CD8-positive, alpha-beta T cell (primary cell): ENCODE measurements at regions of chr14 and their contacts with region 1.

Region 1: DNA sequence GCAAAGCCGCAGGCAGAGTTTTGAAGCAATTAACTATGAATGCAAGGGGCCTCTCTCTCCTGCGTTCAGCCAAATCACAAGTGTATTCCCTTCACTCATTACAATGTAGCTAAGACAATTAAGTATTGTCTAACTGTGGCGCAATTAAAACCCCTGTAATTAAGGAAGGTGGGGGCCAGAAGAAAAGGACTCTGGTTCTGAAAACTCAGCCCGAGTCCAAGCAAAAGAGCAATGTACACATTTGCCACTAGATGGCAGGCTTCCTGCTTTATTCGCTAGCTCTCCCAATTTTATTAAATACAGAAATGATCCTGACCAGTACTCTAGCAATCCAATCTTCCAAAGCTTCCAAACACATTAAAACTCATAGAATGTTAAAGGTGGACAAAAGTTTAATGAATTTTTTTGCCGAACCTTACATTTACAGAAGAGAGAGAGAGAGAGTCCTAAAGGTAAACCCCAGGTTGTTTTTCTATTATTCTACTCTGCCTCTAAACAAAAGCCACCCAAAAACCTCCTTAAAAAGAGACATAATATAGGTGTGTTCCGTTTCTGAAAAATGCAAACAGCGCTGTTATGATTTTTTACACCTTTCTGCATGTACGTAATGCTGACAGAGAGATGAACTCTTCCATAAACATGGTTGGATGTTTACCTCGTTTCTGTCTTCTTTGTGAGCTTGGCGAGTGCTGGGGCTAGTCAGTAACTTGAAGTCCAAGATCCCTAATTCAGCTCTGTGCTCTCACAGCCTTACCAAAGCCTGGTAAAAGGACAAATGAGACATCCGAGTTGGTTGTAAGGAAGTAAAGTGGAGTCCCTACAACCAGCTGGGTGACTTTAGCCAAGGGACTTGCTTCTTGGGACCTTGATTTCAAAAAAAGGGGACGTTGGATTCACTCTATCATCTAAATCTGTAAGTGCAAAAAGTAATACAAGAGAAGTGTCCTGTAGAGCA is 50.9 kb upstream of the VASH1 start:
- DNase-seq: peak in 4 of 9 experiments; percentile 23 to 62 (median 44)
- ATAC-seq: no peak
- H3K4me3 ChIP-seq: no peak overlapping the region
- H3K4me3 Mint-ChIP-seq: no peak overlapping the region
- H3K27ac ChIP-seq: no peak overlapping the region
- H3K27ac Mint-ChIP-seq: no peak overlapping the region
- H3K4me1 ChIP-seq: no peaks in the 10 kb centered on the region
- H3K4me1 Mint-ChIP-seq: no peaks in the 10 kb centered on the region
- H3K27me3 ChIP-seq: no peaks in the 10 kb centered on the region
- H3K27me3 Mint-ChIP-seq: peaks cover 13% of the 10 kb centered on the region
- CTCF ChIP-seq: peak; percentile 63

Region 2: GRCh38 chr14:76687611-76688382 is 22.5 kb before region 1 on chr14:
- CTCF ChIA-PET with region 1: interaction called, 13 read pairs
- POLR2A ChIA-PET with region 1: no interaction called
- intact Hi-C with region 1: no loop called
- DNase-seq: no peak
- ATAC-seq: no peak
- H3K4me3 ChIP-seq: no peak overlapping the region
- H3K4me3 Mint-ChIP-seq: no peak overlapping the region
- H3K27ac ChIP-seq: no peak overlapping the region
- H3K27ac Mint-ChIP-seq: no peak overlapping the region
- H3K4me1 ChIP-seq: no peaks in the 10 kb centered on the region
- H3K4me1 Mint-ChIP-seq: no peaks in the 10 kb centered on the region
- H3K27me3 ChIP-seq: no peaks in the 10 kb centered on the region
- H3K27me3 Mint-ChIP-seq: peaks cover 12% of the 10 kb centered on the region
- CTCF ChIP-seq: no peak

Region 3: DNA sequence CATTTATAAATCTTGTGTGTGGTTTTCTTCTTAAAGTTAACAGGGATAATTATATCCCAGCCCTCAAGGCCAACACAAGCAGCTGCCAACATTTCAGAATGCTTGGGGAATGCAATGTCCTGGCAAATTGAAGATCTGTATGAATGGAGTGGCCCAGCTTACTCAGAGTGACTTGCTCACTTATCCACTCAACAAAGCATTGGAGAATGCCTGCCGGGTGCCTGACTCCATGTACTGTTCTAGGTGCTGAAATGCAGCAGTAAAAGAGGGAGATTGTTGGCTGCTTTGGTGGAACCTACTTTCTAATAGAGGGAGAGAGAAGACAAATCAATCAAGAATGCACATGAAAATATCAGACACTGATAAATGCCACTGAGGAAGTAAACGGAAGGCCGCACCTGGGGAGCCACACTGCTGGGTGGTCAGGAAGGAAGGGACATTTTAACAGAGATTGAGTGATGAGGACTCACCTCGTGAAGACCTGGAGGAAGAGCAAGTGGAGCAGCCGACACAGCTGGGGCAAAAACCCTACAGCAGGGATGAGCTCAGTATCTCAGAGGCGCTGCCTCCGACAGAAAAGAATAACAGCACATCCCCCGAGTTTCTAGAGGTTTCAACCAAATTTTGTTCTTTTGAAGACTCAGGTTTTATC is 10.3 kb before region 1 on chr14:
- CTCF ChIA-PET with region 1: interaction called, 13 read pairs
- POLR2A ChIA-PET with region 1: no interaction called
- intact Hi-C with region 1: no loop called
- DNase-seq: no peak
- ATAC-seq: no peak
- H3K4me3 ChIP-seq: no peak overlapping the region
- H3K4me3 Mint-ChIP-seq: no peak overlapping the region
- H3K27ac ChIP-seq: no peak overlapping the region
- H3K27ac Mint-ChIP-seq: no peak overlapping the region
- H3K4me1 ChIP-seq: no peaks in the 10 kb centered on the region
- H3K4me1 Mint-ChIP-seq: no peaks in the 10 kb centered on the region
- H3K27me3 ChIP-seq: no peaks in the 10 kb centered on the region
- H3K27me3 Mint-ChIP-seq: peaks cover 4% of the 10 kb centered on the region
- CTCF ChIP-seq: no peak

Region 4: DNA sequence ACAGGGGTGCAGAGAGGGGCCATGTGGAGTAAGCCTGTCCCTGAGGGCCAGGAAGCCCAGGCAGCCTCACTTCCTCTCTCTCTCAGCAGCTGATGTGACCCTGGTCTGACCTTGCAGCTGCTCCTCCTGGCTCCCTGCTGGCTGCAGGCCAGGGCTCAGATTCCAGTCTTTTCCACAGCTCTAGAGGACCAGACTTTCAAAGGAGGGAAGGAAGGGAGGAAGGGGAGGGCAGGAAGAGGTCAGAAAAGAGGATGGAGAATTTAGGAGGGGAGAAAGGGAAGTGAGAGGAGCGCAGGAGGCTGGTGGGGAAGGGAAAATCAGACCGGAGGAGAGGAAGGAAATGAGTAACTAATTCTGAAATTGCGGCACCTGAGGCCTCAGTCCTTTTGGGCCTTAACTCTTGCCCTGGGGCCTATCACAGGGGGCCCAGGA is 10.1 kb after region 1 on chr14:
- CTCF ChIA-PET with region 1: interaction called, 37 read pairs
- POLR2A ChIA-PET with region 1: interaction called, 6 read pairs
- intact Hi-C with region 1: no loop called
- DNase-seq: no peak
- ATAC-seq: no peak
- H3K4me3 ChIP-seq: no peak overlapping the region
- H3K4me3 Mint-ChIP-seq: no peak overlapping the region
- H3K27ac ChIP-seq: no peak overlapping the region
- H3K27ac Mint-ChIP-seq: no peak overlapping the region
- H3K4me1 ChIP-seq: no peaks in the 10 kb centered on the region
- H3K4me1 Mint-ChIP-seq: no peaks in the 10 kb centered on the region
- H3K27me3 ChIP-seq: no peaks in the 10 kb centered on the region
- H3K27me3 Mint-ChIP-seq: peaks cover 28% of the 10 kb centered on the region
- CTCF ChIP-seq: no peak

Region 5: DNA sequence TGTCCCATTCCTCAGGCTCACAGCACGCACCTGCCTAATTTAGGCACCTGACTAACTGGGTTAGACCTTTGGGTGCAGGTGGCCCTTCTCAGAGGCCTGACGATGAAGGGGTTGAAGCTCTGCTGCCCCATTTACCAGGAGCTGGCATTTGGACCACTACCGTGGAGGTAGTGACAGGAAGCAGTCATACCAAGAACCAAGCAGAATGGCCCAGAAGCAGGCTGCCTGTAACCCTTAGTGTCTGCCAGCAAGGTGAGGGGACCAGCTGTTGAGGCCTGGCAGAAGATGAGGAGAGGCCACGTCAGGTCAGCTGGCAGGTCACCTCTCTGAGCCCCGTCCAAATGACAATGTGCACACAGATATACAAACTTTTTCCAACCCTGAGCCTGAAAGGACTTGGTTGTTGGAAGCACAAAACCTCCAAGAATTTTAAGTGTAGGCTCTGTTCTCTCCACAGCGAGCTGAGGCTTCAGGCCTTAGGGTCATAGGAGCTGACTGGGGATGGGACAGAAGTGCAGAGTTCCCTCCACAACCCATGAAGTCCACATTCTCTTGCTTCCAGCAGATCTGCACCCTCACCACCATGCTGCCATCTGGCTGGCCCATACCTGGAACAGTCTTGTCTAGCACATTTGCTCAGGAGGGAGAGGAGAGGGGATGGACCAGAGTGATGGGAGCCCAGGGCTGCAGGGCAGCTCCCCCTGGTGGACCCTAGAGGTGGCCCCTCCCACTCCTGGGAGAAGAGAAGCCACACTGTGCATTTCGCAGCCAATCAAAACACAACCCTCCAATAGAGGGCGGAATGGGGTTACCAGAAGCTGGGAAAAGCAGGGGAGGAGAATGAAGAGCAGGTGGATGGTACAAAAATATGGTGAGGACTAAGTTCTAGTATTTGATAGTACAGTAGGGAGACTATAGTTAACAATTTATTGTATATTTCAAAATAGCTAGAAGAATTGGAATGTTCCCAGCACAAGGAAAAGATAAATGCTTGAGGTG is 74.2 kb after region 1 on chr14:
- CTCF ChIA-PET with region 1: interaction called, 27 read pairs
- POLR2A ChIA-PET with region 1: no interaction called
- intact Hi-C with region 1: loop called (anchors 1 to 2 kb)
- DNase-seq: peak; percentile 9 to 73 (median 50)
- ATAC-seq: peak; percentile 93
- H3K4me3 ChIP-seq: no peak overlapping the region
- H3K4me3 Mint-ChIP-seq: no peak overlapping the region
- H3K27ac ChIP-seq: no peak overlapping the region
- H3K27ac Mint-ChIP-seq: peak overlapping the region; percentile 16
- H3K4me1 ChIP-seq: no peaks in the 10 kb centered on the region
- H3K4me1 Mint-ChIP-seq: peaks cover 3% of the 10 kb centered on the region
- H3K27me3 ChIP-seq: no peaks in the 10 kb centered on the region
- H3K27me3 Mint-ChIP-seq: no peaks in the 10 kb centered on the region
- CTCF ChIP-seq: peak; percentile 60

Region 6: GRCh38 chr14:77076113-77076631 is 365.8 kb after region 1 on chr14:
- CTCF ChIA-PET with region 1: interaction called, 31 read pairs
- POLR2A ChIA-PET with region 1: no interaction called
- intact Hi-C with region 1: no loop called
- DNase-seq: no peak
- ATAC-seq: no peak
- H3K4me3 ChIP-seq: no peak overlapping the region
- H3K4me3 Mint-ChIP-seq: no peak overlapping the region
- H3K27ac ChIP-seq: no peak overlapping the region
- H3K27ac Mint-ChIP-seq: no peak overlapping the region
- H3K4me1 ChIP-seq: no peaks in the 10 kb centered on the region
- H3K4me1 Mint-ChIP-seq: no peaks in the 10 kb centered on the region
- H3K27me3 ChIP-seq: no peaks in the 10 kb centered on the region
- H3K27me3 Mint-ChIP-seq: peaks cover 4% of the 10 kb centered on the region
- CTCF ChIP-seq: no peak